HepG2 (cell line): ENCODE measurements at regions of chr3 and their contacts with region 1.

Region 1: DNA sequence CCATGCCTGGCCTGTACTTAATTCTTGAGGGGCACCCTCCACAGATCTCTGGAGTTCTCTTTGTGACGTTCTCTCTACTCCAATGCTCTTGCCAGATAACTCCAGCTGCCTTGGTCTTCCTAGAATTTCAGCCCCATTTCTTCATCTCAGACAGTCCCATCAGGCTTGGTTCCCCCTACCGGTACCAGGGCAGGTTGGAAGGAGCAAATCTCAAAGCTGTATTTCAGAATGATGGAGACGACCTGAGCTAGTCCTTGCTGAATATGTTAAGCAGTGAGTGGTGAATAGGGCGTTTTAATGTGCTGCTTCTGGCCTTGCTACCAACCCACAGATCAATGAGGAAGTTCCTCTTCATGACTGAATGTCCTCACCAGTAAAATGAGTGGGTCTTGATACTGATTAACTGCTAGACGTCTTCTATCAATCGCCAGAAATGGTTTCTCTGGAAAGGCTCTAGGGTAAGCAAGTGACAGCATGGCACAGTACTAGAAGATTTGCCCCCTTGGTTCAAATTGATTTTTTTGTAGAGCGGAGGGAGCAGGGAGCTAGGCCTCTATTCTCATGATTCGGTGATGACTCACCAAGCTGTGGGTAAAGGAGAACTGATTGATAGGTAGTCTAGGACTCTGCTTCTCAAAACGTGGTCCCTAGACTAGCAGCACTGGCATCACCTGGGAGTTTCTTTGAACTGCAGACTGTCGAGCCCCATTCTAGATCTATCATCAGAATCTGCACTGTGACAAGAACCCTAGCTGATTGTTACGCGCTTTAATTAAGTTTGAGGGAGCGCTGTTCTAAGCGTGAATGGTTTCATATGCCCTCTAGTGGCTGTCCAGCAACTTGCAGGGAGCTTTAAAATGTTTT is 67.8 kb downstream of the UBP1 start:
- DNase-seq: no peak
- ATAC-seq: peak; percentile 58
- H3K4me3 ChIP-seq: no peak overlapping the region
- H3K27ac ChIP-seq: no peak overlapping the region
- H3K4me1 ChIP-seq: peaks cover 4% of the 10 kb centered on the region
- H3K27me3 ChIP-seq: no peaks in the 10 kb centered on the region
- CTCF ChIP-seq: peak; percentile 85
- EP300 ChIP-seq: no peak
- POLR2A ChIP-seq: no peak
- RAD21 ChIP-seq: peak; percentile 79

Region 2: GRCh38 chr3:32725721-32726120 is 646.7 kb before region 1 on chr3:
- CTCF ChIA-PET with region 1: no interaction called
- POLR2A ChIA-PET with region 1: no interaction called
- in situ Hi-C with region 1: no loop called
- intact Hi-C with region 1: no loop called
- DNase-seq: no peak
- ATAC-seq: no peak
- H3K4me3 ChIP-seq: no peak overlapping the region
- H3K27ac ChIP-seq: no peak overlapping the region
- H3K4me1 ChIP-seq: no peaks in the 10 kb centered on the region
- H3K27me3 ChIP-seq: no peaks in the 10 kb centered on the region
- CTCF ChIP-seq: no peak
- EP300 ChIP-seq: no peak
- POLR2A ChIP-seq: no peak
- RAD21 ChIP-seq: no peak

Region 3: GRCh38 chr3:32973982-32974381 is 398.5 kb before region 1 on chr3:
- CTCF ChIA-PET with region 1: no interaction called
- POLR2A ChIA-PET with region 1: no interaction called
- in situ Hi-C with region 1: loop called (anchors 25 kb)
- intact Hi-C with region 1: no loop called
- DNase-seq: no peak
- ATAC-seq: no peak
- H3K4me3 ChIP-seq: no peak overlapping the region
- H3K27ac ChIP-seq: no peak overlapping the region
- H3K4me1 ChIP-seq: peaks cover 15% of the 10 kb centered on the region
- H3K27me3 ChIP-seq: peaks cover 0 to 4% of the 10 kb centered on the region in 2 experiments; a peak in 2 of 5 replicates
- CTCF ChIP-seq: no peak
- EP300 ChIP-seq: no peak
- POLR2A ChIP-seq: no peak
- RAD21 ChIP-seq: no peak